HEK293T (cell line): ENCODE measurements at regions of chr18 and their contacts with region 1.

Region 1: DNA sequence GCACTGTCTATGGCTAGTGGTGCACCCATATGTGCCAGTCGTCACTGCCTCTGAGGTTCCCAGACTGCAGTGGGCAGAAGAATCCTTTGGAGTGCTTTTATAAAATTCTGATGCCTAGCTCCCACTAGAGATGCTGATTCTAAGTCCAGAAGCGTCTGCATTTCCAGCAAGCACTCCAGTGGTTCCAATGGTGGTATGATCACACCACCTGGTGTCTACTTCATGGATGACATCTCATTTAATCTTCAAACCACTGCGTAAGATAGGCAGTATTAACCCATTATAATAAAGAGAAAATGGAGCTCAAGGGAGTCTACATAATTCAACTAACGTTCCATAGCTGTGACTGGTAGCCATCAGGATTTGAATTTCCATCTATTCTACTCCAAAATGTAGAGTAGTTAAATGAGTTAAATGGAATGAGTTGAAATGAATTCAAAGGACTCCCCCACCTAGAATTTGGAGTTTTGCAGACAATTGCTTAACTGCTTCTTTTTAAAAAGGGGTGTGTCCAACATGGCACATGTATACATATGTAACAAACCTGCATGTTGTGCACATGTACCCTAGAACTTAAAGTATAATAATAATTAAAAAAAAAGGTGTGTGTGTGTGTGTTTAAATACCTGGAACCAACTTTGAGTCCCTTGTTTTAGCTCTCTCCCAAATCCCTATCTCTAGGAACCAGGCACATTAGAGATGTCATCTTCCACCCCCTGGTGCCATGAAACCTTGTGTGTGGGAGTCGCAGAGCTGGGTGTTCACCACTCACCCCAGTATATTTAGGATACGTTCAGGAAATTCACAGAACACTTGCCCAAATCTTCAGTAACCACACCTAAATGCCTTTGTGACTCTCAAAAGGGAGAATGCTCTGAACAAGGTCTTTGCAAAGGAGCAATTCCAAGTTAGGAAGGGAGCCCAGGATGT is 14.1 kb downstream of the LAMA3 start:
- DNase-seq: peak; percentile 66

Region 2: GRCh38 chr18:23612435-23613085 is 90.8 kb before region 1 on chr18:
- CTCF ChIA-PET with region 1: interaction called, 10 read pairs
- POLR2A ChIA-PET with region 1: interaction called, 6 read pairs
- DNase-seq: no peak

Region 3: DNA sequence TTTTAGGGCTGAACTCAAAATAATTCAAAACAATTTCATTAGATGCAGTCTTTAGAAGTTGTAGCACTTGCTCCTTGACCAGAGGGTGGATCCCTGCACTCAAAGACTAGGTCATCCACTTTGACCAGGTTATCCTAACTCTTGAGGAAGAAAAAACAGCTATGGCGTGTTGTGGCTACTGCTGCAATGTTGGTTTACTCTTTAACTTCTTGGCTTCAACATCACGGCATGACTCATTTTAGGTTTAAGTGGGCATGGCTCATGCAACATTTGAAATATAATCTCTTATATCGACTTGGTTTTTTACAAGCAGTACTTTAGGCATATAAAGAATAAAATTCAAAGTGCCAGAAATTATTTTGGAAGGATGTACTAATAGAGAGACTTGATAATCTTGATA is 76.0 kb before region 1 on chr18:
- CTCF ChIA-PET with region 1: interaction called, 27 read pairs
- POLR2A ChIA-PET with region 1: interaction called, 3 read pairs
- DNase-seq: no peak